ENCODE measurements at regions of chr22 and their contacts with region 1.

Region 1: DNA sequence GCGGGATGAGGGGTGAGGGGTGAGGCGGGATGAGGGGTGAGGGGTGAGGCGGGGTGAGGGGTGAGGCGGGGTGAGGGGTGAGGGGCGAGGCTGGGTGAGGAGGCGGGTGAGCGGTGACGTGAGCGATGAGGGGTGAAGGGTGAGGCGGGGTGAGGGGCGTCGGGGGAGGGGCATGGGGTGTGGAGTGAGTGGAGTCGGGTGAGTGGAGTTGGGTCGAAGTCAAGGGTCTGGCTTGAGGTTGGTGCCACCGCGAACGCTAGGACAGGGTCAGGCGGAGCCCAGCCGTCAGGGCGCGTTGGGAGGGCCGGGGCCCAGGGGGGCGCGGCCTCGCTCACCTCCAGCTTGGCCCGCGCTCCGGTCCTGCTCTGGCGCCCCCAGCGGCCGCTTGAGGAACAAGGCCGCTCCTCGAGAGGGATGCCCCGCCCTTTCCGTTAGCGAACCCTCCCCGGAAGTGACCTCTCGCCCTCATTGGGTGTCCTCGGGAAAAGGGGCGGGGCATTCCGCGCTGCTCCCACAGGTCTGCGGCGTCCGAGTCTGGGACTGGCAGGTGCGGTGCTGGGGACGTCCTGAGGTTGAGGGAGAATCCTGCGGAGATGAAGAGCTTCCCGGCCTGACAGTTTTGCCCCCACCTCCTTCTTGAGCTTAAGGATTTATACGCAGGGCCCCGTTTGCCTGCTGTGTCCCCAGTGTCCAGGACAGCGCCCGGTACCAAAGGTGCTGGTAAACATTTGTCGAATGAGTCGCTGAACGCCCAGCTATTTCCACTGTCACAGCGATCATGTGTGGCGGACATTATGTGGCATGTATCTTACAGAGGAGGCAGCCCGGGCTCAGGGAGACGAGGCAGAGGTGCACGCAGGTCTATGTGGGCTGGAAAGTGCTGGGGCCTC is at the start of gene SYCE3:
- DNase-seq: peak; percentile 93 to 98
- H3K4me3 ChIP-seq: peak within 1 kb of the TSS; percentile 70
- H3K27ac ChIP-seq: no peak within 1 kb of the TSS
- H3K4me1 ChIP-seq: peaks cover 17% of the 10 kb centered on the region
- H3K27me3 ChIP-seq: no peaks in the 10 kb centered on the region
- CTCF ChIP-seq: peak; percentile 98
- total RNA-seq, gene SYCE3: not detected in 2 replicates

Region 2: DNA sequence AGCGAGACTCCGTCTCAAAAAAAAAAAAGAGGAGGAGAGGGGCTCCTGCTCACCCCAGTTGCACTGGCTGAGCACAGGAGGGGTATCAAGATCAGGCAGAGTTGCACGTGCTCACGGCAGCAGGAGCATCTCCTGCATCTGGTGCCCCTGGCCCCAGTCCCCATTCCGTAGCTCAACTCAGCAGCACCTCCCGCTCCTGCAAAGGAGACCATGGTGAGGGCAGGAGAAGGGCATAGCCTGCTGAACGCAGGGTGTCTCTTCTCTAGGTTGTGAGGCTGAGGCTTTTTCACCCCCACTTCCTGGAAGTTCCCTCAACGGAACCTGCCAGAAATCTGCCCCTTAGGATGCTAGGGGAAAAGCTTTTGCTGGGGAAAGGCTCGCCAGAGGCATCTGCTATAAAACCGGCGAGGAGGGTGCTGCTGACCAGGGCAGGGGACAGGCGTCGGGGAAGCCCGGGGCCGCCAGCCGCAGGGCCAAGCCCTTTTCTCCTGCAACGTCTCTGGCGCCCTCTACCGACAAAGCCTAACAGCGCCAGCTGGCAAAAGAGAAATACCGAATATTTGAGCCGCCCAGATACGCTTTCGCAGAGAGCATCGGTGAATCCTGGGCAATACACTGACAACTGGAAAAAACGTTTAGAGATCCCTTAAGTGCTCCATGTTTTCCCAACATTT is 220.7 kb before region 1 on chr22:
- CTCF ChIA-PET with region 1: no interaction called
- POLR2A ChIA-PET with region 1: no interaction called
- intact Hi-C with region 1: no loop called
- DNase-seq: peak; percentile 82 to 88
- H3K4me3 ChIP-seq: peak overlapping the region; percentile 66
- H3K27ac ChIP-seq: peak overlapping the region; percentile 18; the same call in 1 of the 2 replicates
- H3K4me1 ChIP-seq: 0 out of 2 replicates have a peak, but pooled peaks cover 4% of the 10 kb centered on the region
- H3K27me3 ChIP-seq: no peaks in the 10 kb centered on the region
- CTCF ChIP-seq: peak; percentile 99

Region 3: GRCh38 chr22:50357776-50358175 is 205.0 kb before region 1 on chr22:
- CTCF ChIA-PET with region 1: no interaction called
- POLR2A ChIA-PET with region 1: no interaction called
- intact Hi-C with region 1: no loop called
- DNase-seq: no peak
- H3K4me3 ChIP-seq: no peak overlapping the region
- H3K27ac ChIP-seq: no peak overlapping the region
- H3K4me1 ChIP-seq: no peaks in the 10 kb centered on the region
- H3K27me3 ChIP-seq: no peaks in the 10 kb centered on the region
- CTCF ChIP-seq: no peak

Region 4: DNA sequence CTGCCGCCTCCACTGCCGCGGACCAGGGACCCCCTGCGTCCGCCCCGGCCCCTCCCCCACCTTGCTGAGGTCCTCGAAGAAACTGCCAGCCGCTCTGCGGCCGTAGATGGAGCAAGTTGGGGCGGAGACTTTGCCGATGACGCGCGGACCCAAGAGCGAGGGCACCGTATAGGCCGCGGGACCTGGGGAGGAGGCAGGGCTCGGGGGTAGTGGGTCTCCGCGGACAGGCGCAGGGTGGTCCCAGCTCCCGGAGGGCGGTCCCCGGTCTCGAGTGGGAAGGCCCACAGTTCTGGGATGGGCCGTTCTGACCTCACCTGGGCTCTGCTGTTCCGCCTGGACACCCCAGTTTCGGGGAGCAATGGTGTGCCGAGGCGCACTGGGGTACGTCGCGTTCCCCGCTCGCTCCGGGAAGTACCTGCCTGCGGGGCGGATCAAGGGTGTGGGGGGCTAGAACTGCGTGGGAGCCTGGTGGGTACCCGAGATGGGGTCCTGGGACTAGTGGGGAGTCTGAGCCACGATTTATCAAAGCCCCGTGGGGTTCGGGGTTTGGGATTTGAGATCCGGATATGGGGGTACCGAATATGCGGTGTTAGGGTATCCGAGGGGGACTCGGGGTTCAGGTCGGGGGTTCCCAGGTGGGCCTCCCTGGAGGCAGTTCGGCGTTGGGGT is 31.8 kb before region 1 on chr22:
- CTCF ChIA-PET with region 1: interaction called, 14 read pairs
- POLR2A ChIA-PET with region 1: interaction called, 3 read pairs
- intact Hi-C with region 1: loop called (anchors 2 kb)
- DNase-seq: peak; percentile 71
- H3K4me3 ChIP-seq: peak overlapping the region; percentile 87
- H3K27ac ChIP-seq: peak overlapping the region; percentile 60
- H3K4me1 ChIP-seq: peaks cover 26% of the 10 kb centered on the region
- H3K27me3 ChIP-seq: no peaks in the 10 kb centered on the region
- CTCF ChIP-seq: no peak

Region 5: DNA sequence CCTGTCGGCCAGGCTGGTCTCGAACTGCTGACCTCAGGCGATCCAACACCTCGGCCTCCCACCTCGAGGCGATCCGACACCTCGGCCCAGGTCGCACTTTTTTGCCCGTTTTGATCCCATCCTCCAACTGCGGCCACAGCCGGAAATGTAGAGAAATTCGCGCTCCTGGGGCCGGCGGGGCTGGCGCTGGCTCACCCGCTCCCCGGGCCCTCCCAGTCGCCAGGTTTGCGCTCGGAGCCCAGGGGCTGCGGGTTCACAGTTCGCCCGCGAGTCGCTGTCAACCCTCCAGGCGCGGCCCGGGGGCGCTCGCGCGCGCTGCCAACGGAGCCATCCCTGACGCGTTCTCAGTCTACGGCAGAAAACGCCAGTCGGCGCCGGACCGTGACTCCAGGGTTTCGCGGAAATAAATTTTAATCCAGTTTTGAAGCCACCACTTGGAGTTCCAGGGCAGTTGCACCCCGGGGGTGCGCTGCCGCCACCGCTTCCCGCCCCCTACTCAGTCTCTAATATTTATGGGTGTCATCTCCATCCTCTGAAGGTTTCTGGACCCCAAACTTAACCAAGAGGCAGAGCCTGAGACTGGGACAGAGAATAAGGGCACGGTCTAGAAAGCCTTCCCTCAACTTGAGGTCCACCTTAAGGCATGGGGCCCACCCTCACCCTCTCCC is 18.6 kb before region 1 on chr22:
- CTCF ChIA-PET with region 1: interaction called, 5 read pairs
- POLR2A ChIA-PET with region 1: interaction called, 18 read pairs
- intact Hi-C with region 1: no loop called
- DNase-seq: peak; percentile 74 to 82
- H3K4me3 ChIP-seq: peak overlapping the region; percentile 30; the same call in 1 of the 2 replicates
- H3K27ac ChIP-seq: peak overlapping the region; percentile 75
- H3K4me1 ChIP-seq: peaks cover 67% of the 10 kb centered on the region
- H3K27me3 ChIP-seq: no peaks in the 10 kb centered on the region
- CTCF ChIP-seq: peak; percentile 72

Region 6: GRCh38 chr22:50582562-50583293 is 20.0 kb after region 1 on chr22 and contains the start of gene CHKB:
- CTCF ChIA-PET with region 1: no interaction called
- POLR2A ChIA-PET with region 1: interaction called, 3 read pairs
- intact Hi-C with region 1: loop called (anchors 1 kb)
- DNase-seq: peak; percentile 99
- H3K4me3 ChIP-seq: peak within 1 kb of the TSS; percentile 89
- H3K27ac ChIP-seq: peak within 1 kb of the TSS; percentile 86
- H3K4me1 ChIP-seq: peaks cover 18% of the 10 kb centered on the region
- H3K27me3 ChIP-seq: no peaks in the 10 kb centered on the region
- CTCF ChIP-seq: no peak
- total RNA-seq, gene CHKB: 60.0 and 70.4 TPM in 2 replicates

Measured in PC-9 (cell line).